Endothelial cell of umbilical vein (primary cell): ENCODE measurements at regions of chr6 and their contacts with region 1.

Region 1: GRCh38 chr6:70686548-70687133 is 19.0 kb downstream of the SMAP1 start:
- DNase-seq: peak; percentile 59
- H3K4me3 ChIP-seq: no peak overlapping the region
- H3K27ac ChIP-seq: no peak overlapping the region
- H3K4me1 ChIP-seq: no peaks in the 10 kb centered on the region
- H3K27me3 ChIP-seq: no peaks in the 10 kb centered on the region
- CTCF ChIP-seq: peak; percentile 38 to 41
- POLR2A ChIP-seq: no peak

Region 2: GRCh38 chr6:70310063-70310694 is 376.5 kb before region 1 on chr6:
- CTCF ChIA-PET with region 1: interaction called, 40 read pairs
- POLR2A ChIA-PET with region 1: no interaction called
- dilution Hi-C with region 1: no loop called
- intact Hi-C with region 1: loop called (anchors 1 kb)
- DNase-seq: peak; percentile 54
- H3K4me3 ChIP-seq: no peak overlapping the region
- H3K27ac ChIP-seq: no peak overlapping the region
- H3K4me1 ChIP-seq: no peaks in the 10 kb centered on the region
- H3K27me3 ChIP-seq: peaks cover 0 to 5% of the 10 kb centered on the region in 2 experiments
- CTCF ChIP-seq: peak; percentile 25 to 33
- POLR2A ChIP-seq: no peak

Region 3: GRCh38 chr6:70413114-70413991 is 273.3 kb before region 1 on chr6 and contains the start of gene FAM135A:
- CTCF ChIA-PET with region 1: interaction called, 9 read pairs
- POLR2A ChIA-PET with region 1: no interaction called
- dilution Hi-C with region 1: no loop called
- intact Hi-C with region 1: loop called (anchors 5 kb)
- DNase-seq: peak; percentile 98
- H3K4me3 ChIP-seq: peak within 1 kb of the TSS; percentile 64 to 94 (median 92)
- H3K27ac ChIP-seq: peak within 1 kb of the TSS; percentile 52
- H3K4me1 ChIP-seq: peaks cover 6% of the 10 kb centered on the region
- H3K27me3 ChIP-seq: peaks cover 0 to 3% of the 10 kb centered on the region in 2 experiments
- CTCF ChIP-seq: no peak
- POLR2A ChIP-seq: peak; percentile 85
- total RNA-seq, gene FAM135A: 9.6 and 11.5 TPM in 2 replicates

Region 4: DNA sequence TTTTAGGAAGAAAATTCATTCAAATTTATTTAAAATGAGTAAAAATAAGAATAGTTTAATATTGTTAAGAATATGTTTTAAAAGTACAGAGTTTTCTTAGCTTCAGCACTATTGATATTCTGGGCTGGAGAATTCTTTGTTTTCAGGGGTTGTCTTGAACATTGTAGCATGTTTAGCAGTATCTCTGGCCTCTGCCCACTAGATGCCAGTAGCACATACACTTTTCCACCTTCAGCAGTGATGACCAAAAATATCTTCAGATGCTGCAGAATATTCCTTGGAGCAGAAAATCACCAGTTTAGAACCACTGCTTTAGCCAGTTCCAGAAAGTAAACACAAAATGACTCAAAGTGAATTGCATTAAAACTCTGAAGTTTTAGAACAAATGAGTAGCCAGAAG is 139.3 kb before region 1 on chr6:
- CTCF ChIA-PET with region 1: interaction called, 33 read pairs
- POLR2A ChIA-PET with region 1: no interaction called
- dilution Hi-C with region 1: no loop called
- intact Hi-C with region 1: loop called (anchors 1 kb)
- DNase-seq: peak; percentile 17
- H3K4me3 ChIP-seq: no peak overlapping the region
- H3K27ac ChIP-seq: no peak overlapping the region
- H3K4me1 ChIP-seq: no peaks in the 10 kb centered on the region
- H3K27me3 ChIP-seq: no peaks in the 10 kb centered on the region
- CTCF ChIP-seq: peak; percentile 9 to 32
- POLR2A ChIP-seq: no peak

Region 5: DNA sequence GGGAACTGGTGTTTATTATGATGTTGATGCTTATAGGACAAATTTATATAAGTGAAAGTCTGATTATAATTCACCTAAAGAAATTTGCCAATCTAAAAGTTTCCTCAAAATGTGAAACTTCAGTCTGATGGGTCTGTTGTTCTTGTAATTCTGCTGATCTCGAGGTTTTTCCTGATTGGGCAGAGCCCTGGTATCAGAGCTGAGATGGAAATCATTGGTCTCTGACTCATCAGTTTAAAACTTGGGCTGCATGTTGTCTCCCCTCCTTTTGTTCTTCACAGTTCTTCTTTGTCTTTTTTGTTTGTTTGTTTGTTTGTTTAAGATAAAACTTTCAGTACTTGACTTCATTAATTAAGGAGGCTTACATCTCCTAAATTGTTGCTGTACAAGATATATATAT is 13.0 kb before region 1 on chr6:
- CTCF ChIA-PET with region 1: interaction called, 39 read pairs
- POLR2A ChIA-PET with region 1: no interaction called
- dilution Hi-C with region 1: no loop called
- intact Hi-C with region 1: loop called (anchors 2 kb)
- DNase-seq: peak; percentile 25
- H3K4me3 ChIP-seq: no peak overlapping the region
- H3K27ac ChIP-seq: no peak overlapping the region
- H3K4me1 ChIP-seq: peaks cover 17% of the 10 kb centered on the region
- H3K27me3 ChIP-seq: no peaks in the 10 kb centered on the region
- CTCF ChIP-seq: no peak
- POLR2A ChIP-seq: no peak

Region 6: GRCh38 chr6:70717038-70717801 is 30.6 kb after region 1 on chr6:
- CTCF ChIA-PET with region 1: no interaction called
- POLR2A ChIA-PET with region 1: no interaction called
- dilution Hi-C with region 1: no loop called
- intact Hi-C with region 1: no loop called
- DNase-seq: peak; percentile 64
- H3K4me3 ChIP-seq: no peak overlapping the region
- H3K27ac ChIP-seq: peak overlapping the region; percentile 17
- H3K4me1 ChIP-seq: peaks cover 8% of the 10 kb centered on the region
- H3K27me3 ChIP-seq: no peaks in the 10 kb centered on the region
- CTCF ChIP-seq: no peak
- POLR2A ChIP-seq: no peak